ENCODE measurements at regions of chr2 and their contacts with region 1.

Region 1: GRCh38 chr2:197113275-197113711 is 186.8 kb upstream of the PGAP1 start:
- DNase-seq: peak in 1 of 2 experiments; percentile 17
- H3K4me3 ChIP-seq: no peak overlapping the region
- H3K4me3 Mint-ChIP-seq: no peak overlapping the region
- H3K27ac Mint-ChIP-seq: no peak overlapping the region
- H3K4me1 ChIP-seq: no peaks in the 10 kb centered on the region
- H3K4me1 Mint-ChIP-seq: no peaks in the 10 kb centered on the region
- H3K27me3 ChIP-seq: no peaks in the 10 kb centered on the region
- H3K27me3 Mint-ChIP-seq: peaks cover 7% of the 10 kb centered on the region
- CTCF ChIP-seq: peak; percentile 54 to 63

Region 2: GRCh38 chr2:196849895-196850294 is 263.4 kb before region 1 on chr2:
- CTCF ChIA-PET with region 1: no interaction called
- POLR2A ChIA-PET with region 1: no interaction called
- intact Hi-C with region 1: loop called (anchors 5 kb)
- DNase-seq: peak; percentile 41 to 43
- H3K4me3 ChIP-seq: no peak overlapping the region
- H3K4me3 Mint-ChIP-seq: no peak overlapping the region
- H3K27ac Mint-ChIP-seq: no peak overlapping the region
- H3K4me1 ChIP-seq: no peaks in the 10 kb centered on the region
- H3K4me1 Mint-ChIP-seq: no peaks in the 10 kb centered on the region
- H3K27me3 ChIP-seq: no peaks in the 10 kb centered on the region
- H3K27me3 Mint-ChIP-seq: no peaks in the 10 kb centered on the region
- CTCF ChIP-seq: peak; percentile 30 to 63

Region 3: DNA sequence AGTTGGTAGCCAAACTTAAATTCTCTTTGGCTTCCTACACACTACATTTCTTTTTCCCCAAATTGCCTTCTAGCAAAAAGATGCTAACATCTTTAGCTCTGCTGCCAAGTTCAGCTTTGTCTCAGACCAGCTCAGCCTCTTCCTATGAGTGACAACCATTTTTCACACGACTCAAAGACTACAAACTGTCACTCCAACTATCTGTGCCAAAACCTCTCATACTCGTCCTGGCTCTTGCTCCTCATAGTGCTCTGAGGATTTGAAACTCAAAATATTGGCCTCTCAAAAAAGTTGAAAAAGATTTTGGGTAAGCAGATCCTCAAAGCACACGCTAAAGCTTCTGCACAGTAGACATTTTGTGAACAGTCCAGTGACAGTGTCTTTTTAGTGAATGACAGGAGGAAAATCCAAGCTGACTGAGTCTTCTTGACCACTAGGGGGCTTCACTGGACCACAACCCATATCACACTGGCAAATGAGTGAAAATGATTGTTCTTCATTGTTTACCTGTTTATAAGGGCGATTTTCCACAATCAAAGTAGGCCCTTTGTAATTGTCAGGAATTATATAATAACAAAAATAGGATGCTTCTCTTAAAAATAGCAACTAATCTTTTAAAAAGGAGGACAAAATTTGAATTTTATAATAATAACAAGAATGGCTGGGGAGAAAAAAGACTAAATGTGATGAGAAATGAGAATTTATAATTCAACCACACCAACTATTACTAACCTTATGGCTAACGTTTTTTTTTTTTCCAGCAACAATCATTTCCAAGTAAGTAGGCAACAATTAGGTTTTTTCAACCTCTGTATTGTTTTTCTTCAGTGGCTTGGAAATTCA is 101.3 kb before region 1 on chr2:
- CTCF ChIA-PET with region 1: no interaction called
- POLR2A ChIA-PET with region 1: no interaction called
- intact Hi-C with region 1: loop called (anchors 5 kb)
- DNase-seq: peak; percentile 43 to 51
- H3K4me3 ChIP-seq: no peak overlapping the region
- H3K4me3 Mint-ChIP-seq: no peak overlapping the region
- H3K27ac Mint-ChIP-seq: no peak overlapping the region
- H3K4me1 ChIP-seq: no peaks in the 10 kb centered on the region
- H3K4me1 Mint-ChIP-seq: no peaks in the 10 kb centered on the region
- H3K27me3 ChIP-seq: no peaks in the 10 kb centered on the region
- H3K27me3 Mint-ChIP-seq: peaks cover 22% of the 10 kb centered on the region
- CTCF ChIP-seq: peak; percentile 73 to 88

Region 4: DNA sequence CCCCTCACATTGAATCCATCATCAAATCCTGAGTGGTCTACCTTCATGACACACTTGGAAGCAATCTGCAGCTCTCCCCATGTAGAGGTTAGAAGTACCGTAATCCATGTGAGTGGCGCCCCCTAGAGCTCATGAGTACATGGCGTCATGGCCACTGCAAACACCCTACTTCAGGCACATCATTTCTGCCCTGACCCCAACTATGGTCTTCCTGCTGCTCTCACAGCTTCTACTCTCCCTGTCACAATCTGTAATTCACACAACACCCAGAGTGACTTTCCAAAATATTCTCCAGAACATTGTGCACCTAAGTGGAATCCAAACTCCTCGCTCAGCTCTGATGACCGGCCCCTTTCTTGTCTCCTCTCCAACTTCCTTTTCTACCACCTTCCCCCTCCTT is 55.4 kb after region 1 on chr2:
- CTCF ChIA-PET with region 1: interaction called, 10 read pairs
- POLR2A ChIA-PET with region 1: no interaction called
- intact Hi-C with region 1: loop called (anchors 1 kb)
- DNase-seq: peak; percentile 64 to 67
- H3K4me3 ChIP-seq: no peak overlapping the region
- H3K4me3 Mint-ChIP-seq: no peak overlapping the region
- H3K27ac Mint-ChIP-seq: no peak overlapping the region
- H3K4me1 ChIP-seq: no peaks in the 10 kb centered on the region
- H3K4me1 Mint-ChIP-seq: no peaks in the 10 kb centered on the region
- H3K27me3 ChIP-seq: no peaks in the 10 kb centered on the region
- H3K27me3 Mint-ChIP-seq: peaks cover 11% of the 10 kb centered on the region
- CTCF ChIP-seq: peak; percentile 50 to 72

Region 5: GRCh38 chr2:197191177-197191939 is 78.1 kb after region 1 on chr2:
- CTCF ChIA-PET with region 1: interaction called, 3 read pairs
- POLR2A ChIA-PET with region 1: no interaction called
- intact Hi-C with region 1: loop called (anchors 1 kb)
- DNase-seq: peak in 1 of 2 experiments; percentile 46
- H3K4me3 ChIP-seq: no peak overlapping the region
- H3K4me3 Mint-ChIP-seq: no peak overlapping the region
- H3K27ac Mint-ChIP-seq: no peak overlapping the region
- H3K4me1 ChIP-seq: no peaks in the 10 kb centered on the region
- H3K4me1 Mint-ChIP-seq: no peaks in the 10 kb centered on the region
- H3K27me3 ChIP-seq: peaks cover 1% of the 10 kb centered on the region; the same call in 1 of the 2 replicates
- H3K27me3 Mint-ChIP-seq: peaks cover 12% of the 10 kb centered on the region
- CTCF ChIP-seq: peak; percentile 47 to 66

Region 6: GRCh38 chr2:197310271-197310985 is 197.1 kb after region 1 on chr2 and contains the start of gene ANKRD44:
- CTCF ChIA-PET with region 1: no interaction called
- POLR2A ChIA-PET with region 1: no interaction called
- intact Hi-C with region 1: loop called (anchors 2 kb)
- DNase-seq: peak; percentile 75 to 83
- H3K4me3 ChIP-seq: peak within 1 kb of the TSS; percentile 67
- H3K4me3 Mint-ChIP-seq: peak within 1 kb of the TSS; percentile 78
- H3K27ac Mint-ChIP-seq: no peak within 1 kb of the TSS
- H3K4me1 ChIP-seq: peaks cover 8% of the 10 kb centered on the region; the same call in 1 of the 2 replicates
- H3K4me1 Mint-ChIP-seq: peaks cover 8% of the 10 kb centered on the region
- H3K27me3 ChIP-seq: no peaks in the 10 kb centered on the region
- H3K27me3 Mint-ChIP-seq: peaks cover 17% of the 10 kb centered on the region
- CTCF ChIP-seq: peak in 1 of 2 experiments; percentile 11
- total RNA-seq, gene ANKRD44: 1.0 and 3.1 TPM in 2 replicates

Region 7: DNA sequence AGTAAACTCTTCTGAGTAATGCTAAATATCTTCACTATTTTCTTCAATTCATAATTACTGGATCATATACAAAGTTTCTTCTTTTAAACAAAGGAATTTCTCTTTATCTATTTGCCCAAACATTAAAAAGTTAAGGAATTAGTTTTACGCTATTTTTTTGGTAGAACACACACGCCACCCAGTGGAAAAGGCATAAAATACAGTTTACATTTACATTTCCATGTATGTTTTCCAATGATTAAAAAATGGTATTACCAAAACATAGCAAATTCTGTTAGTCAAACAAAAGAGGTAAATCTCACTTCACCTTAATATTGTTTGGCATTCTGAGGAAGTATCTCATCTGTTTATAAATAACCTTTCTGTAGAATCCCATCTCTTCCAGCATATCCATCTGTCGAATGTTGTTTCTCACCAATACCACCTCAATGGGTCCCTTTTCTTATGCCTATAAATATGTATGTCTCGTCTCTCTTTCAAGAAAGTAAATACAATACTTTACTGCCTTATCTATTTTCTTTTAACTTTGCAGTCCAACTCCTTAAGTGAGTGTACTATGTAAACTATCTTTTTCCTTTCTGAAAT is 664.6 kb after region 1 on chr2:
- CTCF ChIA-PET with region 1: no interaction called
- POLR2A ChIA-PET with region 1: no interaction called
- intact Hi-C with region 1: loop called (anchors 5 kb)
- DNase-seq: peak in 1 of 2 experiments; percentile 35
- H3K4me3 ChIP-seq: no peak overlapping the region
- H3K4me3 Mint-ChIP-seq: no peak overlapping the region
- H3K27ac Mint-ChIP-seq: no peak overlapping the region
- H3K4me1 ChIP-seq: no peaks in the 10 kb centered on the region
- H3K4me1 Mint-ChIP-seq: peaks cover 8% of the 10 kb centered on the region
- H3K27me3 ChIP-seq: no peaks in the 10 kb centered on the region
- H3K27me3 Mint-ChIP-seq: no peaks in the 10 kb centered on the region
- CTCF ChIP-seq: peak; percentile 61 to 81

Measured in Caco-2 (cell line).